AG04450 (cell line): ENCODE measurements at regions of chr5 and their contacts with region 1.

Region 1: DNA sequence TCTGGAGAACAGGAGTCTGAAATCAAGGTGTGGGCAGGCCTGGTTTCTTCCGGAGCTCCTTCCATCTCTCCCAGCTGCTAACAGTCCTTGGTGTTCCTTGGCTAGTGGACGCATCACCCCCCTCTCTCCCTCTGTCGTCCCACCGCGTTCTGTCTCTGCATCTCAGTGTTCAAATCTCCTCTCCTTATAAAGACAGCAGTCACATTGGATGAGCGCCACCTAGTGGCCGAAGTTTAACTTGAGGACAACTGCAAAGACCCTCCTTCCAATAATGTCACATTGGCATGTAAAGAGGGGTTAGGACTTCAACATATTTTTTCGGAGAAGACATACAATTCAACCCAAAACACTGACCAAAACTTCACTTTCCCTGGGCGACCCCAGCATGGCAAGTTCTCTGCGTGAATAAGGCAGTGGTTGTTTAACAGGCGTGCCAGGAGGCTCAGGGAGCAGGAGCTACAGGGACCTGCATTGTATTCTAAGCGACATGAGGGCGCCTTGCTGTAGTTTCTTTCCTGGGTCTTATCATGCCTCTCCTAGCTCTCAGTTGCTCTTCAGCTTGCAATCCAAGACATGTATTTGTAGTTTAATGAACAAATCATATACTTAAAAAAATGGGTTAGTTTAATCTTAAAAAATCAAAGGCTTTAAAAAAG is 27.9 kb upstream of the BASP1 start:
- DNase-seq: peak; percentile 58
- H3K4me3 ChIP-seq: no peak overlapping the region
- H3K27ac ChIP-seq: no peak overlapping the region
- H3K27me3 ChIP-seq: no peaks in the 10 kb centered on the region
- CTCF ChIP-seq: peak; percentile 89

Region 2: DNA sequence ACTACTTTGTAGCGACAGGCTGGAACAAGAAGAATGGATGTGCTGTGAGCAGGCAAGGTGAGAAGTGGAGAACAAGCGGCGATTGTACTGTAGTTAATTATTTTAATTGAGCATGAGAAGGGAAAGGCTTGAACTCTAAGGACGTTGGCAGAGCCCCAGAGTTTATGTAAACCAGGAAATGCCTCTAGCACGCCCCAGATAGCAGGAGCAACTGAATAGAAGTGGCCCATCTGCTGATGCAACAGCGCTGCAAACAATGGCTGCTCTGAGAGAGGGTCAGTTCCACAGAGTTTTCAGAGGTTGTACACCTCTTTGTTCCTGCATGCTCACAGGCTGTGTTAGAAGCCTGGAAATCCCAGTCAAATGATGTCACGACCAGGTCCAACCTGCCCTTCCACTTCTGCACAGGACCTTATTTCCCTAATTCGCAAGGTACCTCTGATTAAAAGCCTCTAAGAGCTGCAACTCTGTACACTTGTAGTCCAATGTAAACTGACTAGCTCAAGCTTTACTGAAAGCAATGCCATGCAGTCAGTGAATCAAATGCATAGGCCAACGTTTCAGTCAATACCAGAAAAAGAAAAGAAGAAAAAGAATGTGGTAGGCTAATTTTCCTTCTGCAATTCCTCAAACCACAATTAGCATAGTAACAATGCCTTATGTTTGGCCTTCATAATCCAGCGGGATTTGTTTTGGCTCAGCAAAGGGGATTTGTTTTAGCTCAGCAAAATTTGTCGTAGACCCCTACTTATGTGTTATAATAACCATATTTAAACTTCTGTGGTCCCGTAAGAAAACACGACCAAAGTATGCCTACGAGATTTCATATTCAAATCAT is 453.1 kb before region 1 on chr5:
- CTCF ChIA-PET with region 1: interaction called, 10 read pairs
- POLR2A ChIA-PET with region 1: no interaction called
- DNase-seq: peak; percentile 54
- H3K4me3 ChIP-seq: no peak overlapping the region
- H3K27ac ChIP-seq: peak overlapping the region; percentile 81
- H3K27me3 ChIP-seq: no peaks in the 10 kb centered on the region
- CTCF ChIP-seq: no peak

Region 3: DNA sequence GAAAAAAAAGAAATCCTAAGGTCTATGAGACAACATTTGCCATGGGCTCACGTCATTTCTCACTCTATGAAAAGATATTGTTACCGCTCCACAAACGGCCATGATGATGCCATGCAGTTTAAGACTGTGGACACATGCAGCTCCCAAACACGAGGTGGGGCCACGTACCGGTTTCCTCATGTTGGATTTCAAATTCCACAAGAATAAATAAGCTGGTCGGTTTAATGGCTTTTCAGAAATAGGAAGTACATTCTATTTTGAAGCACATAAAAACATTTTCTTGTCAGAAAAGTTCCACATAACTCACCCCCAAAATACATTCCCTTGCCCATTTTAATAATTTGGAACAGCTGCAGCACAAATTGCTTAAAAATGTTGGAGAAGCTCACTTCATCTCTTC is 384.0 kb before region 1 on chr5:
- CTCF ChIA-PET with region 1: interaction called, 19 read pairs
- POLR2A ChIA-PET with region 1: no interaction called
- DNase-seq: no peak
- H3K4me3 ChIP-seq: no peak overlapping the region
- H3K27ac ChIP-seq: no peak overlapping the region
- H3K27me3 ChIP-seq: no peaks in the 10 kb centered on the region
- CTCF ChIP-seq: no peak

Region 4: GRCh38 chr5:16934123-16934522 is 255.4 kb before region 1 on chr5:
- CTCF ChIA-PET with region 1: interaction called, 93 read pairs
- POLR2A ChIA-PET with region 1: interaction called, 7 read pairs
- DNase-seq: peak; percentile 38
- H3K4me3 ChIP-seq: peak overlapping the region; percentile 85
- H3K27ac ChIP-seq: no peak overlapping the region
- H3K27me3 ChIP-seq: no peaks in the 10 kb centered on the region
- CTCF ChIP-seq: peak; percentile 99

Region 5: DNA sequence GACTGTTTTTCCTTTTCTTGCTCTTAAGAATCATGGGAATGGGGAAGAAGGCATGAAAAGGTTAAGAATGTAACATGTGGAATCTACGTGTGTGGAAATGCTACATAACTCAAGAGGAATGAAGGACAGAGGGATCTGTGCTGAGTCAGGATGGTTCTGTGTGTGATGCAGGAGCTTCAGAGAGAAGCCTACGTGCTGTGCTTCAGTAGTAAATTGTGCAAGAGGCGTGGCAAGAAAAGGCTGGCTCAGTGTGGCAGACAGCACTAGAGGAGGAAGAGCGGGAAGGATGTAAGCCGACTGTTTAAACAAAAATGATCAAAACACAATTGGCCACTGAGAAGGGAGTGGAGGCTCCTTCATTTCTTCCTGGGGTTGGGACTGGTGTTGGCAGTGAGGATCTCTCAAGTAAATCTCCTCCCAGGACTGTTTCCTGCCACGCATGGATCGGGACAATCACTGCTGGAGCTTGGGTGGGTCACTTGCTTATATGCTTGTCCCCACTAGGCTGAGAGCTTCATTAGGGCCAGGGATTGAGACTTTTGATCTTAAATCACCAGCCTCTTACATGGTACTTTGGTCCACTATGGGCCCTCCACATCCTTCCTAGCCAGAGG is 31.5 kb before region 1 on chr5:
- CTCF ChIA-PET with region 1: interaction called, 18 read pairs
- POLR2A ChIA-PET with region 1: interaction called, 4 read pairs
- DNase-seq: peak; percentile 96
- H3K4me3 ChIP-seq: no peak overlapping the region
- H3K27ac ChIP-seq: peak overlapping the region; percentile 95
- H3K27me3 ChIP-seq: no peaks in the 10 kb centered on the region
- CTCF ChIP-seq: no peak

Region 6: GRCh38 chr5:17400724-17401464 is 211.4 kb after region 1 on chr5:
- CTCF ChIA-PET with region 1: no interaction called
- POLR2A ChIA-PET with region 1: no interaction called
- DNase-seq: no peak
- H3K4me3 ChIP-seq: no peak overlapping the region
- H3K27ac ChIP-seq: no peak overlapping the region
- H3K27me3 ChIP-seq: no peaks in the 10 kb centered on the region
- CTCF ChIP-seq: no peak